ACHN (cell line): ENCODE measurements at regions of chr12 and their contacts with region 1.

Region 1: GRCh38 chr12:59403259-59403932 is 192.4 kb upstream of the SLC16A7 start:
- DNase-seq: peak; percentile 80

Region 2: DNA sequence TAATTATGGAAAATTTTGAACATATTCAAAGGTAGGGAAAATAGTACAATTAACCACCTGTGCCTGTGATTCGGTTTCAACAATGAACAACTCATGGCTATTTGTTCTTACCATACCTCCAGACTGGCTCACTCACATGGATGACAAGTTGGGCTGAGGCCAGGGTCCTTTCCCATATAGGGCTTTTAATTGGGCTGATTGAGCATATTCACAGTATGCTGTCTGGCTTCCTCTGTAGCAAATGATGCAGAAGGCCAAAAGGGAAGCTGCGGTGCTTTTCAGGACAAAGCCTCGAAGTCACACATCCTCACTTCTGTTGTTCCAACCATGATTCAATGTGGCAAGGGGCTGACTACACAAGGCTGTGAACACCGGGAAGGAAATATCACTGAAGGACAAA is 105.1 kb before region 1 on chr12:
- in situ Hi-C with region 1: no loop called
- DNase-seq: no peak

Region 3: DNA sequence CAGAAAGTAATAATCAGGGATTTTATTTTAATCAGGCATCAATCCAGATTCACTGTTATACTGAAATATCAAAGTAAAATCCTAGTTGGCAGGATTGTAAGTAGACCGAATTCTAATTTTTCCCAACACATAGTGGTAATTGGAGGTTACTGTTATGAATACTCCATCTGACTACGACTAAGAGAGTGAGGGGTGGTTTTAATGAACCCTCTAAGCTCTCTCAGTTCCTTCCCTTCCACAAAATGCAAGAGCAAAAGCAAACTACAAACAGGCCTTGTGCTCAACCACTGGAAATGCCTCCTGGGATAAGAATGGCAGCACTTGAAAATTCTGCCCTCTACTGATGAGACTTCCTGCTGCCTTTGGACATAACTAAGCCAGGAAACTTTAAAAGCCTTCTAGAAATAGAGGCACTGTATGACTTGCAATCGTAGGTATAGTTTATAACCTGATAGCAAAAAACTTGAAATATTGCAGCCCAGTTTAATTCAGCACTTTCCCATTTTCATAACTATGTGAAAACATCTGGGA is 377.3 kb after region 1 on chr12:
- in situ Hi-C with region 1: loop called (anchors 25 kb)
- DNase-seq: peak; percentile 73

Region 4: DNA sequence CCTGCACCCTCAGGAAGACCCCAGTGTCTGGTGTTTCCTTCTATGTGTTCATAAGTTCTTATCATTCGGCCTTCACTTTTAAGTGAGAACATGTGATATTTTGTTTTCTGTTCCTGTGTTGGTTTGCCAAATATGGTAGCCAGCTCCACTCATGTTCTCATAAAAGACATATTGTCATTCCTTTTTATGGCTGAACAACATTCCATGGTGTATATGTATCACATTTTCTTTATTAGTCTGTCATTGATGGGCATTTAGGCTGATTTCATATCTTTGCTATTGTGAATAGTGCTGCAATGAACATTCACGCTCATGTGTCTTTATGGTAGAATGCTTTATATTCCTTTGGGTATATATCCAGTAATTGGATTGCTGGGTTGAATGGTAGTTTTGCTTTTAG is 837.5 kb after region 1 on chr12:
- in situ Hi-C with region 1: no loop called
- DNase-seq: no peak